Gastrocnemius medialis (tissue), 4 donors: ENCODE measurements at regions of chr9 and their contacts with region 1.

Region 1: GRCh38 chr9:36166101-36166927 is 2.9 kb upstream of the CCIN start:
- DNase-seq: peak; percentile 56 to 67
- ATAC-seq: peak; percentile 87 to 90
- H3K4me3 ChIP-seq: peak overlapping the region; percentile 43 to 58 (median 50)
- H3K27ac ChIP-seq: peak overlapping the region; percentile 44 to 67 (median 58)
- H3K4me1 ChIP-seq: peaks cover 2 to 18% of the 10 kb centered on the region in 2 donors
- H3K27me3 ChIP-seq: peaks cover 0 to 9% (median 8%) of the 10 kb centered on the region in 3 donors
- CTCF ChIP-seq: peak; percentile 74 to 97 (median 91)
- POLR2A ChIP-seq: no peak

Region 2: GRCh38 chr9:35954942-35955546 is 211.3 kb before region 1 on chr9:
- in situ Hi-C with region 1: no loop called
- intact Hi-C with region 1: loop called (anchors 2 kb)
- DNase-seq: peak in 1 of 2 donors; percentile 42
- ATAC-seq: peak; percentile 85 to 87
- H3K4me3 ChIP-seq: no peak overlapping the region
- H3K27ac ChIP-seq: no peak overlapping the region
- H3K4me1 ChIP-seq: no peaks in the 10 kb centered on the region
- H3K27me3 ChIP-seq: no peaks in the 10 kb centered on the region
- CTCF ChIP-seq: peak; percentile 66 to 86 (median 70)
- POLR2A ChIP-seq: no peak

Region 3: DNA sequence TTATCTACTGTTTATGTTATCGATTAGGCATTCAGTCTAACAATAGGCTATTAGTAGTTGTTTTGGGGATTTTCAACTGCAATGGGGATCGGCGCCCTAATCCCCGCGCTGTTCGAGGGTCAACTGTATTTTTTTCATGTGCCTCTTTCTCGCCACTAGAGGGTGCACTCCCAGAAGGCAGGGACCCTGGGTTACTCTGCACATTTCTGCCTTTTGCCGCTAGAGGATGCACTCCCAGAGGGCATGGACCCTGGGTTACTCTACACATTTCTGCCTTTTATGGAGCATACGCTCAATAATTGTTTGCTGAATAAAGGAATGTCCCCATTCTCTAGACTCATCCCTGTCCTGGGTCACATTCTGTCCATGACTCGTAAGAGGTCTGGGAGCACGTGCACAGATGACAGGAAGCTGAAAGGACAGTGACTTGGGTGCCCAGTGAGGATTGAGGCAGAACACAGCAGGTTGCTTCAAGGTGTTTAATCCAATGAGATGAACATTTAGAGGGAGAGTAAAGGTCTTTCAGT is 157.5 kb before region 1 on chr9:
- in situ Hi-C with region 1: no loop called
- intact Hi-C with region 1: loop called (anchors 1 kb)
- DNase-seq: peak; percentile 11 to 41
- ATAC-seq: peak; percentile 78 to 87
- H3K4me3 ChIP-seq: no peak overlapping the region
- H3K27ac ChIP-seq: no peak overlapping the region
- H3K4me1 ChIP-seq: no peaks in the 10 kb centered on the region
- H3K27me3 ChIP-seq: peaks cover 0 to 3% (median 0%) of the 10 kb centered on the region in 3 donors
- CTCF ChIP-seq: peak; percentile 48 to 90 (median 81)
- POLR2A ChIP-seq: no peak

Region 4: DNA sequence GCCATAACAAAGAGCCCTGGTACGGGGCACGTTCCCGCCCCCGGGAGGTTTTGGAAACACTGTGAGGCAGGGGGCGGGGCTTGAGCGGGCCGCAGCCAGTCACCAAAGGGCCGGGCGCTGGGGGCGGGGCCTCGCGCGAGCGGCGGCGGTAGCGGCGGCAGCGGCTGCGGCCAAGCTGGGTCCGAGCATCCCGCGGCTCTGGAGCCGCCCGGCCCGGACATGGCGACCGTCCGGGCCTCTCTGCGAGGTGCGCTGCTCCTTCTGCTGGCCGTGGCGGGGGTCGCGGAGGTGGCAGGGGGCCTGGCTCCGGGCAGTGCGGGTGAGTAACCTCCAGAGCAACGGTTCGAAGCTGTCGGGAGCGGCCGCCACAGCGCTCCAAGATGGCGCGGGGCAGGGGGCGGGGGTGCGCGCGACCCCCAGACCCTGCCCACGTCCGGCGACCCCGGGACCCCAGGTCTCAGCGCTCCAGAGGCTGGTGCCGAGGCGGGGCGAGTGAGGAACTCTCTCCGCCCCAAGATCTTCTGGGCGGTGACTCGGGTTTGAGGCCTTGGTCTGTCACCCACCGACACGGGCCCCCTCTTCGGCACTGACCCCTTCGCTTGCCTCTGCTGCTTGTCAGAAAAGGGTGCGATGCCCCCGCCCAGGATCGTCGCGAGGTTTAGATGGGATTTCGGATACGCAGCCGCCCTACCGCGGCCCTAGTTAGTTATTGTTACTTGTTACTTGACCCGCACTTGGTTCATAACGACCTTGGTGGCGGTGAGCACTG is 129.3 kb before region 1 on chr9 and contains the start of gene RECK:
- in situ Hi-C with region 1: no loop called
- intact Hi-C with region 1: loop called (anchors 10 kb)
- DNase-seq: peak; percentile 62 to 72
- ATAC-seq: peak; percentile 78 to 87
- H3K4me3 ChIP-seq: peak within 1 kb of the TSS; percentile 68 to 90 (median 76)
- H3K27ac ChIP-seq: peak within 1 kb of the TSS; percentile 67 to 77 (median 68)
- H3K4me1 ChIP-seq: peaks cover 4 to 10% of the 10 kb centered on the region in 2 donors
- H3K27me3 ChIP-seq: peaks cover 0 to 10% (median 7%) of the 10 kb centered on the region in 3 donors
- CTCF ChIP-seq: no peak
- POLR2A ChIP-seq: peak; percentile 77 to 78
- total RNA-seq, gene RECK: 2.9 to 4.1 (median 3.5) TPM

Region 5: DNA sequence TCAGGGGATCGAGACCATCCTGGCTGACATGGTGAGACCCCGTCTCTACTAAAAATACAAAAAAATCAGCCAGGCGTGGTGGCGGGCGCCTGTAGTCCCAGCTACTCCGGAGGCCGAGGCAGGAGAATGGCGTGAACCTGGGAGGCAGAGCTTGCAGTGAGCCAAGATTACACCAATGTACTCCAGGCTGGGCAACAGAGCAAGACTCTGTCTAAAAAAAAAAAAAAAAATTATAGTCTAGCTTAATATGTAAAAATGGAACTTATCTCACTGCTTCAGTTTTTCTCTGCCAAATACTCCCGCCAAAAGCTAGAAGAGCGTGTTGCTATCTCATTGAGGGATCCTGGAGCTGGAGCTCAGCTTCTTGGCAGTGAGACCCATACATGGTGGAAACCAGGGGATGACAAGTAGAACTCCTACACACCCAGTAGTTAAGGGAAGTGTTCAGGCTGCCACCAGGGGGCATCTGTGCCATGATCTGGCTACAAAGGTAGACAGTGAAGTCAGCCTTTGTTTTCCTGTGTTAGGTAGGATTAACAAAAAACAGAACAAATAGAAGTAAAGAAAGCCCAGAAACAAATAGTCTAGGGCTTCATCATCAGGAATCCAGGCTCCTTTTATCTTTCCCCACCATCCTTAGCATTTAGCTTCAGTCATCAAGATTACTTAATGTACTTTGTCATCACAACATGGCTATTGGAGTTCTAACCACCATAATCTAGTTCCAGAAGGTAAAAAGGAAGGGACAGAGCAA is 63.4 kb before region 1 on chr9:
- in situ Hi-C with region 1: loop called in 2 of 4 experiments (anchors 5 kb)
- intact Hi-C with region 1: loop called (anchors 1 kb)
- DNase-seq: peak; percentile 31 to 63
- ATAC-seq: peak; percentile 77 to 86
- H3K4me3 ChIP-seq: no peak overlapping the region
- H3K27ac ChIP-seq: no peak overlapping the region
- H3K4me1 ChIP-seq: no peaks in the 10 kb centered on the region
- H3K27me3 ChIP-seq: no peaks in the 10 kb centered on the region
- CTCF ChIP-seq: peak; percentile 50 to 74 (median 68)
- POLR2A ChIP-seq: no peak

Region 6: DNA sequence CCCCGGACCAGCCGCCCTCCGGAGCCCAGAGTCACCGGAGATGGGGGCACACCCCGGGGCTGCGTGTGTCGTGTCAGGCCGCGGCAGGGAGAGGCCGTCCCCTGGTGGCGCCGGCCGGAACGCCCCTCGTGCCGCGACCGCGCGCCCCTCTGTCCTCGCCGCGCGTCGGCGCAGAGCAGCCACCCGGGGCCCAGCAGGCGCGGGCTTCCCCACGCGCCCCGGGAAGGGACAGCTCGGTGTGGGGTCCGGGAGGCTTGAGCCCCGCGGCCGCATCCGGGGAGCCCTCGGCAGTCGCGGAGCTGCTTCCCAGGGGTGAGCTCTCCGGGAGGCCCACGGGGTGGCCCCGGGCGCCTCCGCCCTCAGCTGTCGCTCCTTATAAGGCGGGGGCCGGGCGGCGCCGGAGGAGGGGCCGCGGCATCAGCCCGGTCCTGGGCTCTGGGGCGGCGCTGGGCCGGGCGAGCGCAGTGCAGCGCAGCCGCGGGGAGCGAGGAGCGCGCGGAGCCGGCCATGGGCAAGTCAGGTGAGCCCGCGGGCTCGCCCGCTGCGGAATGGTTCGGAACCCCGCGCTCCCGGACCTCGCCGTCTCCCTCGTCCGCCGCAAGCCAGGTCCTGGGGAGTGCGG is 29.9 kb before region 1 on chr9 and contains the start of gene GLIPR2:
- in situ Hi-C with region 1: no loop called
- intact Hi-C with region 1: loop called (anchors 2 kb)
- DNase-seq: peak; percentile 52 to 57
- ATAC-seq: peak; percentile 77 to 79
- H3K4me3 ChIP-seq: peak within 1 kb of the TSS; percentile 57 to 79 (median 60)
- H3K27ac ChIP-seq: peak within 1 kb of the TSS; percentile 39 to 71 (median 54)
- H3K4me1 ChIP-seq: peaks cover 7 to 13% of the 10 kb centered on the region in 2 donors
- H3K27me3 ChIP-seq: peaks cover 5 to 21% (median 17%) of the 10 kb centered on the region in 3 donors
- CTCF ChIP-seq: no peak
- POLR2A ChIP-seq: peak; percentile 67 to 82
- total RNA-seq, gene GLIPR2: 3.3 to 5.3 (median 3.9) TPM